ENCODE measurements at regions of chr3 and their contacts with region 1.

Region 1: DNA sequence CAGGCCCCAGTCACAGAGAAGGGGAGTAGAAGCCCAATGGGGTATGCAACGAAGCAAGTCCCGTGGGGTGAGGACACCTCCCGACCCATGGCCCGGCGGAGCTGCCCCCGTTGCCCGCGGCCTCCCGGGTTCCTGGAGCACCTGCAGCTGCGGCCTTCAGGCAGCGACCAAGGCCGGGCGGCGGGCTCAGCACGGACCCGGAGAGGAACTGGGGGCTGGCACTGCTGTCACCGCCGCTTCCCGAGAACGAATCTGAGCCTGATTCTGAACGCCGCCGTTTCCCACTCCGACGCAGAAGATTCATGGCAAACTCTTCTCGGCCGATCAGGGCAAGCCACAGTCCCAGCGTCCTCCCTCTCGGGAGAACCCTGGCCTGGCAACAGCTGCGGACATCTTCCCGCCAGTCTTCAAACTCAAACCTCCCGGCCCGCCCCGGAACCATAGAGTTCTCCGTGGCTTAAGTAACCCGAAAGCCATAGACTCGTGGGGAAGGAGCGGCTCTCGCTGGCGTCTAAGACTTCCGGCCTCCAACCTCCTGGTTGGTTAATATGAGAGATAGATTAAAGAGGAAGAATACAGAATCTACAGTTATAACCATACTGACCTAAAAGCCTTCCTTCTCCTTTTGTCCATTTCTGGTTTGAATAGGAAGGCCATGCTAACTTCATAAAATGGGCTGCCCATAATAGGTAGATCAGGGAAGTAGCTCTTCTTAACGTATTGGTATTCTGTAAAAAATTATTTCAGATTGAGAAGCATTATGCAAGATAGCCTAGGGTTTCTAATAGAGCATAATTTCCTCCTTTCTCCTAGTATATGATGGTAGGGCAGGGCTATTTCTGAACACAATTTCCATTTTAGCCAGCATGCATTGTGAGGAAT is at the start of gene POLQ:
- DNase-seq: peak; percentile 84 to 92 (median 88)
- H3K4me3 ChIP-seq: peak within 1 kb of the TSS; percentile 90 to 99
- H3K4me3 Mint-ChIP-seq: peak within 1 kb of the TSS; percentile 89 to 95 (median 92)
- H3K27ac ChIP-seq: peak within 1 kb of the TSS; percentile 64
- H3K27ac Mint-ChIP-seq: peak within 1 kb of the TSS; percentile 89 to 96 (median 92)
- H3K4me1 ChIP-seq: peaks cover 10% of the 10 kb centered on the region
- H3K4me1 Mint-ChIP-seq: peaks cover 6 to 11% (median 10%) of the 10 kb centered on the region in 4 donors
- H3K27me3 ChIP-seq: no peaks in the 10 kb centered on the region
- H3K27me3 Mint-ChIP-seq: no peaks in the 10 kb centered on the region
- total RNA-seq, gene POLQ: 0.28 to 0.35 TPM

Region 2: DNA sequence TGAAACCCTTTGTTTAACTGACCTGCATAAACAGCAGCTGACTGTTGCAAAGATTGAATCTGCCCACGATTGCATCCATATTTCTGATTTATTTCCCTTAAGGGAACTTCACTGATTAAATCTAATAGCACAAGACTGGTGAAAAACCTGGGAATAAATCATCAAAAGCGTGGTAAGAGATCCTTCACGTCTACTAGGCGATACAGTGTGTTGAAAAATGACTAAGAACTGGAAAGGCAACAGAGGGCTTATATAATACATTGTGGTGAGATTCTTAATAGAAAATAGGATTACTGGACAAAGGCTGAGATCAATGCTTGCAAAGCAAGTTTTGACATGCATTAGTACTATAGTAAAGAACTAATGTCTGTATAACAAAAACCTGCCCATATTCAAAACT is 49.0 kb before region 1 on chr3:
- CTCF ChIA-PET with region 1: no interaction called
- POLR2A ChIA-PET with region 1: no interaction called
- intact Hi-C with region 1: no loop called
- DNase-seq: no peak
- H3K4me3 ChIP-seq: no peak overlapping the region
- H3K4me3 Mint-ChIP-seq: no peak overlapping the region
- H3K27ac ChIP-seq: no peak overlapping the region
- H3K27ac Mint-ChIP-seq: no peak overlapping the region
- H3K4me1 ChIP-seq: no peaks in the 10 kb centered on the region
- H3K4me1 Mint-ChIP-seq: no peaks in the 10 kb centered on the region
- H3K27me3 ChIP-seq: no peaks in the 10 kb centered on the region
- H3K27me3 Mint-ChIP-seq: no peaks in the 10 kb centered on the region

Region 3: DNA sequence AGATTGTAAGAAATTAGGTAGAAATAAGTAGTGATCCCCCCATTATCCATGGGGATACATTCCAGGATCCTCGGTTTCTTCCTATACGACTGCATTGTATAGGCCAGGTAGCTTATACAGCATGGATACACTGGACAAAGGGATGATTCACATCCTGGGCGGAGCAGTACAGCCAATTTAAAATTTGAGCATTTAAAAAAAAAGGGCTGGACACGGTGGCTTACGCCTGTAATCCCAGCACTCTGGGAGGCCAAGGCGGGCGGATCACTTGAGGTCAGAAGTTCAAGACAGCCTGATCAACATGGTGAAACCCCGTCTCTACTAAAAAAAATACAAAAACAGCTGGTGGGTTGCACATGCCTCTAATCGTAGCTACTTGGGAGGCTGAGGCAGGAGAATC is 21.0 kb after region 1 on chr3:
- CTCF ChIA-PET with region 1: no interaction called
- POLR2A ChIA-PET with region 1: no interaction called
- intact Hi-C with region 1: no loop called
- DNase-seq: no peak
- H3K4me3 ChIP-seq: no peak overlapping the region
- H3K4me3 Mint-ChIP-seq: no peak overlapping the region
- H3K27ac ChIP-seq: no peak overlapping the region
- H3K27ac Mint-ChIP-seq: no peak overlapping the region
- H3K4me1 ChIP-seq: no peaks in the 10 kb centered on the region
- H3K4me1 Mint-ChIP-seq: no peaks in the 10 kb centered on the region
- H3K27me3 ChIP-seq: no peaks in the 10 kb centered on the region
- H3K27me3 Mint-ChIP-seq: peaks cover 2% of the 10 kb centered on the region in 2 donors

Region 4: DNA sequence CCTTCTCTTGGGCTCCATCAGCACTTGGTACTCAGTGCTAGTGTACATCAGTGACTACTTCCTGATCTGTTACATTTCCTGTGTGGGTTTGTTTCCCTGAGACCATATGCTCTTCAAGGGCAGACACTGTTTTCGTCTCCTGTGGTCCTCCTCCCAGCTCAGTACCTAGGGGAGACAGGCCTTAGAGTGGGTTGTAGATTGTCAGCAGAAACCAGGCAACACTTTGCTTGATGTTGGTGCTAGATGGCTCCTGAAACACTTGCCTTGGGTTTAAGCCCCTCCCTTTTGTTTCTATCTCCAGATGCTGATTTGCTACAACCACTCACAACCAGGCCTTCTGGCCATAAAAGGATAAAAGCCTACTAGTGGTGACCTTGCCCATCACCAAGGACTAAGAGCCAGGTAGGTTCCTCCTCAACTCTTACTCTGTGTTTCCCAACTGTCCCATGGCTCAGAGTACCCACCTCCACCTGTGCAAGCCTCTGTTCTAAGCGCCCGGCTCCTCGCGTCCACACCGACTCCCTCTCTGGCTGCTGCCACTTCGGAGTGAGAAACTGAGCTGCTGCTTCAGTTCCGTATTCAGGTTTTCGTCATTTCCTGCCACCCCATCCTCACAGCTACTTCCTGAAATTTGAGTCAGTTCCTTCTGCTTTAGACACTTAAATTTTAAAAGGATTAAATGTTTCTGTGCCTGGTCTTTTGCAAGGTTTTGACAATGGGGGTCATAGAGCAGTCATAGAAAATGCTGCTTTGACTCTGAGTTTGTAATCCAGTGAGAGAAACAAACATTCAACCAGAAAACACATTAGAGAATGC is 114.7 kb after region 1 on chr3 and contains the start of gene HCLS1:
- CTCF ChIA-PET with region 1: interaction called, 5 read pairs
- POLR2A ChIA-PET with region 1: interaction called, 13 read pairs
- intact Hi-C with region 1: loop called (anchors 1 kb)
- DNase-seq: peak; percentile 80 to 86 (median 83)
- H3K4me3 ChIP-seq: peak within 1 kb of the TSS; percentile 58 to 76
- H3K4me3 Mint-ChIP-seq: peak within 1 kb of the TSS; percentile 91 to 99 (median 94)
- H3K27ac ChIP-seq: peak within 1 kb of the TSS; percentile 85
- H3K27ac Mint-ChIP-seq: peak within 1 kb of the TSS; percentile 95 to 100 (median 99)
- H3K4me1 ChIP-seq: peaks cover 42% of the 10 kb centered on the region
- H3K4me1 Mint-ChIP-seq: peaks cover 36 to 62% (median 50%) of the 10 kb centered on the region in 4 donors
- H3K27me3 ChIP-seq: no peaks in the 10 kb centered on the region
- H3K27me3 Mint-ChIP-seq: no peaks in the 10 kb centered on the region
- total RNA-seq, gene HCLS1: 336 TPM

Region 5: DNA sequence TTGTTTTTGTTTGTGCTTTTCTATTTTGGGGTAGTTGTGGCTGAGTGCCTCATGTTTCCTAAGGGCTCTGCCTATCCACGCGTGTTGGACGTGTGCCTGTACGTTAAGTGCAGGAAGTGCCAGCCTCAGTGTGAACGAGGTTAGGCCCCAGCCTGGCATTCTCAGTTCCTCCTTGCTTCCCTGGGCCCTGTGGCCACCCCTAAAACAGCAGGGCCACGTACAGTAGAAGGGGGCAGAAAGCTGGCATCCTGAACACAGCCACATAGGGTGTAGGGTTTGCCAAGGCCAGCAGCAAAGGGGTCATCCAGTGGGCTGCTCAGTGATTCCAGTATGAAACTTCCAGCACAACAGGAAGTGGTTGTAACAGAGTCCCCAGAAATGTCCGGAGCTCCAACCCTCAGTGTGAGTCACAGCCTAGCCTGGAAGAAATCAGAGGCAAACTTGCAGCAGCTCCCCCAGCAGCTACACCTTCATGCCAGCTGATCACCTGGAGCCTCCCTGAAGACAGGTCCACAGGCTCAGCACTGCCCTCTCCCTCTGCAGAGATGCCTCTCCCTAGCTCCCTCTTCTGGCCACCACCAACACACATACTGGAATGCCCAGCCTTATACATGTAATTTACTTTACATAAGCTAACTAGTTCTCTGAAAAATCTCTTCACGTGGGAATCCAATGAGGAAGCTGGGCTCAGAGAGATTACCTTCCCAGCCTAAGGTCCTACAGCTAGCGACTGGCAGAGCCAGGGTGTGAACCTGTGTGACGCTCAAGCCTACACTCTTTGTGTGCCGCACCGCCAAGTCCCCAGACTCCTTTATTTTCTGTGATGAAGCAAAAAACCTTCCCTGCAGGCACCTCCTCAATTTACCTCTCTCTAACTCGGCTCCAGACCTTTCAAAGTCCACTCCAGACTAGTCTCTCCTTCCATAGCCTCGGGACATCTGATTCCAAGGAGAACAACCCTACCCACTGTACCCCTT is 449.6 kb after region 1 on chr3:
- CTCF ChIA-PET with region 1: interaction called, 18 read pairs
- POLR2A ChIA-PET with region 1: no interaction called
- intact Hi-C with region 1: no loop called
- DNase-seq: peak in 4 of 5 donors; percentile 9 to 14 (median 12)
- H3K4me3 ChIP-seq: no peak overlapping the region
- H3K4me3 Mint-ChIP-seq: no peak overlapping the region
- H3K27ac ChIP-seq: no peak overlapping the region
- H3K27ac Mint-ChIP-seq: peak overlapping the region in 2 of 7 donors; percentile 2 to 57
- H3K4me1 ChIP-seq: no peaks in the 10 kb centered on the region
- H3K4me1 Mint-ChIP-seq: peaks cover 5 to 7% (median 7%) of the 10 kb centered on the region in 4 donors
- H3K27me3 ChIP-seq: no peaks in the 10 kb centered on the region
- H3K27me3 Mint-ChIP-seq: peaks cover 0 to 4% of the 10 kb centered on the region in 2 donors

Region 6: GRCh38 chr3:122356415-122356814 is 810.6 kb after region 1 on chr3:
- CTCF ChIA-PET with region 1: interaction called, 3 read pairs
- POLR2A ChIA-PET with region 1: no interaction called
- intact Hi-C with region 1: loop called (anchors 1 kb)
- DNase-seq: peak in 4 of 5 donors; percentile 12 to 24 (median 20)
- H3K4me3 ChIP-seq: no peak overlapping the region
- H3K4me3 Mint-ChIP-seq: no peak overlapping the region
- H3K27ac ChIP-seq: no peak overlapping the region
- H3K27ac Mint-ChIP-seq: no peak overlapping the region
- H3K4me1 ChIP-seq: no peaks in the 10 kb centered on the region
- H3K4me1 Mint-ChIP-seq: peaks cover 0 to 1% (median 0%) of the 10 kb centered on the region in 4 donors
- H3K27me3 ChIP-seq: no peaks in the 10 kb centered on the region
- H3K27me3 Mint-ChIP-seq: no peaks in the 10 kb centered on the region

Region 7: DNA sequence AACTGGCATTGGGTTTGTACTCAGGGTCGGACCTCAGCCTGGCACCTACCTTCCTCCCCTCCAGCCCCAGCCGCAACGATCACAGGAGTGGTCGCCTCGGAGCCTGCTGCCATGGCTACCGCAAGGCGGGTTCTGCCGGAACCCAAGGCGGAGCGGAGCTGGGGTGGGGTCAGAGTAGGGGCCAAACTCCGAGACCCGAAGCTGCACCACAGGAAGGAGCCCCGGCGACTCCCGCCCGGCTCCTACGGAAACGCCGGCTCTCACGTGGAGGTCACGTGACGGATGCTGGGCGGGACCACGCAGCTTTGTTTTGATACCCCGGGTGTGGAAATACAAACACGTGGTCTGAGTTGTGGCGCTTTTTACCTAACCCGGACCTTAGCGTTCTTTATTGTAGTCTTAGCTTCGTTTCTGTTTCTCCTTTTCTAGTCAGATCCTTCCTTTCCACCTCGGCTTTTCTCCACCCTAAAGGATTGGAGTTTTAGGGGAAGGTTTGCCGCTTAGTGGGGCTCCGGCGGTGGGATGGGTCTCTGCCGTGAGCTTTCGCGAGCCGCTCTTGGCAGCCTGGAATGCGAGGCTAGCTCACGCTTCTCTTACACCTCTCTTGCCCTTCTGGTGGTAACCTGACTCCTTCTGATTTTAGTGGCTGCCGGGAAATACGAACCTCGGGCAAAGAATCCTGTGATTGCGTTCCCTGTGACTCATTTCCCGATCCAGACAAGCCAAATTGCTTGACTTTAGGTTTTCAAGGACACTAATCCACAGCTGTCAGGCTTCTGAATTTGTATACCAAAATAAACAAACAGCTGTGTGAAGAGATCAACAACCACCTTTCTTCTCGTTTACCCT is 1248.0 kb after region 1 on chr3 and contains the start of gene HSPBAP1:
- CTCF ChIA-PET with region 1: no interaction called
- POLR2A ChIA-PET with region 1: no interaction called
- intact Hi-C with region 1: loop called (anchors 10 kb)
- DNase-seq: peak; percentile 85 to 91 (median 87)
- H3K4me3 ChIP-seq: peak within 1 kb of the TSS; percentile 78 to 83
- H3K4me3 Mint-ChIP-seq: peak within 1 kb of the TSS in 6 of 8 donors; percentile 91 to 97 (median 94)
- H3K27ac ChIP-seq: peak within 1 kb of the TSS; percentile 74
- H3K27ac Mint-ChIP-seq: peak within 1 kb of the TSS in 5 of 7 donors; percentile 95 to 98 (median 97)
- H3K4me1 ChIP-seq: peaks cover 54% of the 10 kb centered on the region
- H3K4me1 Mint-ChIP-seq: peaks cover 25 to 32% (median 29%) of the 10 kb centered on the region in 4 donors
- H3K27me3 ChIP-seq: no peaks in the 10 kb centered on the region
- H3K27me3 Mint-ChIP-seq: no peaks in the 10 kb centered on the region
- total RNA-seq, gene HSPBAP1: 22.9 to 23.2 TPM

Region 8: GRCh38 chr3:123258811-123259420 is 1713.1 kb after region 1 on chr3:
- CTCF ChIA-PET with region 1: no interaction called
- POLR2A ChIA-PET with region 1: no interaction called
- intact Hi-C with region 1: loop called (anchors 2 kb)
- DNase-seq: peak in 4 of 5 donors; percentile 7 to 24 (median 12)
- H3K4me3 ChIP-seq: no peak overlapping the region
- H3K4me3 Mint-ChIP-seq: no peak overlapping the region
- H3K27ac ChIP-seq: no peak overlapping the region
- H3K27ac Mint-ChIP-seq: peak overlapping the region in 3 of 7 donors; percentile 8 to 65 (median 46)
- H3K4me1 ChIP-seq: no peaks in the 10 kb centered on the region
- H3K4me1 Mint-ChIP-seq: peaks cover 0 to 4% (median 2%) of the 10 kb centered on the region in 4 donors
- H3K27me3 ChIP-seq: no peaks in the 10 kb centered on the region
- H3K27me3 Mint-ChIP-seq: no peaks in the 10 kb centered on the region